K562 (cell line): ENCODE measurements at regions of chr1 and their contacts with region 1.

Region 1: GRCh38 chr1:17335821-17336710 is 28.1 kb downstream of the PADI4 start:
- DNase-seq: peak; percentile 67 to 81 (median 72)
- ATAC-seq: peak; percentile 92
- H3K4me3 ChIP-seq: no peak overlapping the region
- H3K27ac ChIP-seq: no peak overlapping the region
- H3K4me1 ChIP-seq: no peaks in the 10 kb centered on the region; a peak in 1 of 5 replicates
- H3K27me3 ChIP-seq: peaks cover 25 to 51% of the 10 kb centered on the region in 2 experiments; a peak in 4 of 5 replicates
- CTCF ChIP-seq: peak; percentile 83 to 96 (median 91)
- EP300 ChIP-seq: no peak
- POLR2A ChIP-seq: no peak
- RAD21 ChIP-seq: peak; percentile 44 to 76

Region 2: DNA sequence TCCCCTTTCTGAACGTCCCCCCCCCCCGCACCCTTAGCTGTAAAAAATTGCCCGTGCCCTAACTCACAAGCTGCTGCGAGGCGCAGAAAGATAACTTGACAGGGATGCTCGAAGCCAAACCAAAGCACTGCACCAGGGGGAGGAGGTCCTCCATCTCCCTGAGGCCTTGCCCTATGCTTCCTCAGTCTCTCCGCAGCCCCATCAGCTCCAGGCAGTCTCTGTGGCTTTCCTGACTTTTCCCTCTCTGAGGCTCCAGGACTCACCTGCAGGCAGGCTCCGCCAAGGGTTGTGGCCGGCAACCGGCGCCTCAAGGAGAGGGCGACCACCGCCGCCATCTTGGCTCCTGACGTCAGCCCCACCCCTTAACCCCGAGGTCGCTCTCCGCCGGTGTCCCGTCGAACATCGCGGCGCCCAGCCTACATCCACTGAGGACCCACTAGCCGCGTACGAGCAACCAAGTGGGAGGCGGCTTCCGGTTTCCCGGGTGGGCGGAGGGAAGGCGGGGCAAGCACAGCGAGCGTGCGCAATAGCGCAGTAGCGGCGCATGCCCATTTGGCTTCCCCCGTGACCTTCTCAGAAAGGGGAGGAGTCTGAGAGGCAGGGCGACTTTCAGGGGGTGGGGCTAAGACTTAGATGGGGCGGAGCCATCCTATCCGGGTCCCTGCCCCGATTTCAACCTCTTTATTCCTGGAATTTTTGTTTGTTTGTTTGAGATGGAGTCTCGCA is 282.2 kb before region 1 on chr1 and contains the start of gene SDHB:
- CTCF ChIA-PET with region 1: interaction called, 12 read pairs
- POLR2A ChIA-PET with region 1: no interaction called
- in situ Hi-C with region 1: no loop called
- intact Hi-C with region 1: loop called (anchors 10 kb)
- DNase-seq: peak; percentile 99
- ATAC-seq: peak; percentile 99
- H3K4me3 ChIP-seq: peak within 1 kb of the TSS; percentile 53
- H3K27ac ChIP-seq: peak within 1 kb of the TSS; percentile 80
- H3K4me1 ChIP-seq: peaks cover 0 to 15% of the 10 kb centered on the region in 2 experiments; a peak in 3 of 5 replicates
- H3K27me3 ChIP-seq: peaks cover 5 to 8% of the 10 kb centered on the region in 2 experiments; a peak in 3 of 5 replicates
- CTCF ChIP-seq: 0 out of 6 replicates have a peak, but pooled peaks of 1 of the 3 experiments have one; percentile 0
- EP300 ChIP-seq: peak; percentile 48
- POLR2A ChIP-seq: peak; percentile 94
- RAD21 ChIP-seq: no peak
- polyA plus RNA-seq, gene SDHB: 207 to 339 TPM

Region 3: GRCh38 chr1:17059739-17060460 is 276.2 kb before region 1 on chr1:
- CTCF ChIA-PET with region 1: interaction called, 12 read pairs
- POLR2A ChIA-PET with region 1: no interaction called
- in situ Hi-C with region 1: no loop called
- intact Hi-C with region 1: loop called (anchors 10 kb)
- DNase-seq: peak; percentile 60 to 78 (median 72)
- ATAC-seq: peak; percentile 98
- H3K4me3 ChIP-seq: no peak overlapping the region
- H3K27ac ChIP-seq: no peak overlapping the region
- H3K4me1 ChIP-seq: peaks cover 0 to 5% of the 10 kb centered on the region in 2 experiments; a peak in 3 of 5 replicates
- H3K27me3 ChIP-seq: peaks cover 11 to 15% of the 10 kb centered on the region in 2 experiments; a peak in 4 of 5 replicates
- CTCF ChIP-seq: peak; percentile 87 to 96 (median 92)
- EP300 ChIP-seq: no peak
- POLR2A ChIP-seq: no peak
- RAD21 ChIP-seq: peak; percentile 79 to 92

Region 4: DNA sequence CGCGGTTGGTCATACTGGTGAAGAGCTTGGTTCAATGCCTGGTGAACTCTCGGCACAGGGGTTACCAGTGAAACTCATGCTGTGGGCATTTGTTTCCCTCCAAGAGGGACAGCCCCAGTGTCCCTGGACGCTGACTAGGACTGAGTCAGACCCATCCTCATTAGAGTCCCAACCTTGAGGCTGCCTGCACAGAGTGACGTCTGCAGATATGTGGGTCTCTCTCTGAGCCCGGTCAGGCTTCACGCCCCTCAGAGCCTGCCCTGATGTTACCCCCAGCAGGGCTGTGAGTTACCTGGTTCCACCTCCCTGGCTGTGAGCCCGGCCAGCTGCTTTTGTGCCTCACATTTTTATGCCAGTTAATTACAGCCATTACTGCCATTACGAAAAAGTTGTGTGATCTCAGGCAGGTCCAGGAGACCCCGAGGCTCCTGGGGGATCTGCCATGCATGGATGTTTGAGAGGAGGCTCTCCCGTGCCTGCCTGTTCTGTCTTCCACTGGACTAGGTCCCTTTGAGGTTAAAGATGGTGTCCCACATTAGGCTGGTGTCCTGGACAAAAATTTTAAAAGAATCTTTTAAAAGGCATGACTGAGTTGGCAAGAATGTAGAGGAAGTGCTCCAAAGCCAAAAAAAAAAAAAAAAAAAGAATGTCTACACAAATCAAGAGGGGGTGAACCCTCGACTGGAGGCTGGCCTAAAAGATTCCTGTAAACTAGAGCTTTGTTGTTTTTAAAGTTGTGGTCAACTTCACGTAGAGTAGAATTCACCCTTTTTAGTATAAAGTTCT is 167.8 kb before region 1 on chr1:
- CTCF ChIA-PET with region 1: no interaction called
- POLR2A ChIA-PET with region 1: no interaction called
- in situ Hi-C with region 1: no loop called
- intact Hi-C with region 1: no loop called
- DNase-seq: peak in 1 of 4 experiments; percentile 2
- ATAC-seq: no peak
- H3K4me3 ChIP-seq: no peak overlapping the region
- H3K27ac ChIP-seq: no peak overlapping the region
- H3K4me1 ChIP-seq: no peaks in the 10 kb centered on the region
- H3K27me3 ChIP-seq: peaks cover 16 to 28% of the 10 kb centered on the region in 2 experiments
- CTCF ChIP-seq: no peak
- EP300 ChIP-seq: no peak
- POLR2A ChIP-seq: no peak
- RAD21 ChIP-seq: no peak

Region 5: DNA sequence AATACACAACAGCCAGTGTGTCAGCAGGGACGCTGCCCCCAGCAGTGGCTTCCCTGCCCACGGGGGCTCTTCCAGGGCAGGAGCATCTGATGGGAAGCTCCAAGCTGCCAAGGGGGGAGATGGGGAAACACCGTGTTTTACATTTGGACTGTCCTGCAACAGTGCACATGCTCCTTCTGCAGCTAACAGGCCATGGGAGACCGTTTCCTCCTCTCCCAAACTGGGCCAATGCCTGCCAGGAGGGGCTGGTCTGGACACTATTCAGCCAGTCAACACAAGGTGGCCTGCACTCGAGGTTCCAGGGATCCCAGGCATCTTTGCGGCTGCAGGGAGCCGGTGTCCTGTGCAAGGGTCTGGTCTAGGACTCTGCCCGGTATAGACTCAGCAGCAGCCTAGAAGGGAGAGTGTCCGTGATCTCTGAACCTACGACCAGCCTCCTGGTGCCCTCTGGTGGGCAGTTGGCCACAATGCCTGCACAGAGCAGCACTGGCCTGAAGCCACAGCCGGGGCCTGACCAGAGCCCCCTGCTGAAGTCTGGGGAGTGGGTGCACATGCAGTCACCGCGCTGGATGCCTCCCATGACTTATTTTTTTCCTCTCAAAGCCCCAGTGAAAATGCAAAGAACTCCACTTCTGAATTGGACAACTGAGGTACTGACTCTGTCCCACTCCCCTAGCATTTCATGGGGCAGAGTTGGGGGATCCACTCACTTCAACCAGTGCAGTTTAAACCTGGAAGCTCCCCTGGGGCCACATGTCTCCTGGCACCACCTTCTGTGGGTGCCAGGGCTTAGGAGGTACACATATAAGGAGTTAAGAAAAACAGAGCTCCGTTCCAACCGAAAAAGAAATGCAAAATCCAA is 70.1 kb after region 1 on chr1:
- CTCF ChIA-PET with region 1: no interaction called
- POLR2A ChIA-PET with region 1: no interaction called
- in situ Hi-C with region 1: no loop called
- intact Hi-C with region 1: loop called (anchors 5 kb)
- DNase-seq: peak; percentile 81 to 84 (median 82)
- ATAC-seq: peak; percentile 94
- H3K4me3 ChIP-seq: no peak overlapping the region
- H3K27ac ChIP-seq: no peak overlapping the region
- H3K4me1 ChIP-seq: peaks cover 13 to 40% of the 10 kb centered on the region in 2 experiments; a peak in 4 of 5 replicates
- H3K27me3 ChIP-seq: no peaks in the 10 kb centered on the region
- CTCF ChIP-seq: peak; percentile 90 to 96 (median 94)
- EP300 ChIP-seq: no peak
- POLR2A ChIP-seq: peak; percentile 79
- RAD21 ChIP-seq: peak; percentile 39 to 69; a peak in 3 of 4 replicates

Region 6: DNA sequence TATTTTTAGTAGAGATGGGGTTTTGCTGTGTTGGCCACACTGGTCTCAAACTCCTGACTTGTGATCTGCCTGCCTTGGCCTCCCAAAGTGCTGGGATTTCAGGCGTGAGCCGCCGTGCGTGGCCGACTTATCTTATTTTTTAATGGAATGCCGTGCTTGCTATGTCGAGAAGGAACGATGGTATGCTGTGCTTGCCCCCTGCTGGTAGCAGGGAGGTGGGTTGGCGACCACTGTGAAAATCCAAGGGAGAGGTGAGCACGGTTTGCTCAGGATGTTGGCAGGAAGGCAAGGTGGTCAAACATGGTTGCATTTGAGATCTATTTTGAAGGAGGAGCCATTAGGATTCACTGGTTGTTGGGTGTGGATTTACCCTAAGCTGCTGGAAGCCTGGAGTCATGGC is 149.2 kb after region 1 on chr1:
- CTCF ChIA-PET with region 1: no interaction called
- POLR2A ChIA-PET with region 1: no interaction called
- in situ Hi-C with region 1: no loop called
- intact Hi-C with region 1: loop called (anchors 10 kb)
- DNase-seq: peak in 3 of 4 experiments; percentile 37 to 61 (median 51)
- ATAC-seq: peak; percentile 48
- H3K4me3 ChIP-seq: no peak overlapping the region
- H3K27ac ChIP-seq: no peak overlapping the region
- H3K4me1 ChIP-seq: peaks cover 20 to 23% of the 10 kb centered on the region in 2 experiments; a peak in 4 of 5 replicates
- H3K27me3 ChIP-seq: no peaks in the 10 kb centered on the region; a peak in 1 of 5 replicates
- CTCF ChIP-seq: peak; percentile 66 to 76 (median 73)
- EP300 ChIP-seq: no peak
- POLR2A ChIP-seq: no peak
- RAD21 ChIP-seq: peak; percentile 26 to 61

Region 7: DNA sequence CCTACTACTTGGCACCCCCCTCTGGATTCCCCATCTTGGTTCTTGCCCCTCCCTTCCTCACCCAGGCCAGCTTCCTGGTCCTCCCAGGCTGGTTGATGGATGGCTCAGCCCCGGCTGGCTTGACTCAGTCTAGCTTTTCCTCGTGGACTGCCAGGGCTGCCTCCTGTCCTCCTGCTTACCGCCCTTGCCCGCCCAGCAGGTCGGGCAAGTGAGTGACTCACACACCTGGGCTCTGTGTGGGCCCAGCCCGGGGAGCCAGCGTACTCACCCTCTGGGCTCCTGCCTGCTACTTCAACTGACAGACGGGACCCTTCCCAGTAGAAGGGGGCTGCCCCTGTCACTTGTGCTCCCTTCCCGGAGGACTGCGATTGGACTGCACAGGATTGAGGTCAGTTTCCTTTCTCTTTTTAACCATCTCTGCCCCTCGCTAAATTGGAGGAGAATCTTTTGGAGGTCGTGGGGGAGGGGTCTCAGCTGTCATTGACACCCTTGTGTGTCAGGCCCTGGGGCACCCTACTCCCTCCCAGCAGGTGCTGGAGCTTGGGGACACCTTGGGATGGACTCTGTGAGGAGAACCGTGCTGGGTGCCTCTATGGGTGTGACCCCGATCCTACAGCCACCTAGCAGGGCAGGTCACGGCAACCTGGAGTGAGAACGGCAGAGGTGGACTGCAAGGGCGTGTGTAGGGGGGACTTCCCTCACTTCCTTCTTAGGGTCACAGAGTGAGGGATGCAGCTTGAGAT is 184.2 kb after region 1 on chr1:
- CTCF ChIA-PET with region 1: no interaction called
- POLR2A ChIA-PET with region 1: no interaction called
- in situ Hi-C with region 1: no loop called
- intact Hi-C with region 1: no loop called
- DNase-seq: no peak
- ATAC-seq: peak; percentile 45
- H3K4me3 ChIP-seq: no peak overlapping the region
- H3K27ac ChIP-seq: no peak overlapping the region
- H3K4me1 ChIP-seq: peaks cover 0 to 4% of the 10 kb centered on the region in 2 experiments; a peak in 2 of 5 replicates
- H3K27me3 ChIP-seq: peaks cover 27 to 67% of the 10 kb centered on the region in 2 experiments; a peak in 4 of 5 replicates
- CTCF ChIP-seq: no peak
- EP300 ChIP-seq: no peak
- POLR2A ChIP-seq: no peak
- RAD21 ChIP-seq: no peak